Activated T-helper 2 cell treated with anti-CD3 and anti-CD28 coated beads, Interferon-gamma antibody, Interleukin-2, Interleukin-4, amounts not matched to agents 10 μg/mL and 5 μg/mL and 100 μg/mL, durations not matched to agents 14 hours and 24 hours and 36 hours (primary cell): ENCODE measurements at regions of chr15 and their contacts with region 1.

Region 1: DNA sequence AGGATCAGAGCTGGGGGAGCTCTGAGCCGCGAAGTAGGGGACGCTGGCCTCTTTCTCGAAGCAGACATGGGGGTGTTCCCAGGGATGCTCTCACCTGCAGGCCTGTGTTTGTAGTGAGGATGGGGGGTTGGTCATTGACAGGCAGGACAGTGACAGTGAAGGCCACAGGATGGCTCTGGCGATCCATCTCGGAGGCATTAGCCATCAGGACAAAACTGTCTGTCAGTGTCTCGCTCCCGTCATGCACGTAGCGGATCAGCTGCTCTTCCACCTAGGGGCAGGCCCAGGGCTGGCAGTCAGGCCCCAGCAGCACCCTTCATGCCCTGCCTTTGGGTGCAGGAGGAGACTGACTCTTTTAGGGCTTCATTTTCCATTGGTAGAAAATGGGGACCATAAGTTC is 28.0 kb downstream of the CSPG4 start:
- DNase-seq: no peak
- H3K4me3 Mint-ChIP-seq: no peak overlapping the region
- H3K27ac Mint-ChIP-seq: no peak overlapping the region
- H3K4me1 Mint-ChIP-seq: no peaks in the 10 kb centered on the region
- H3K27me3 Mint-ChIP-seq: no peaks in the 10 kb centered on the region

Region 2: DNA sequence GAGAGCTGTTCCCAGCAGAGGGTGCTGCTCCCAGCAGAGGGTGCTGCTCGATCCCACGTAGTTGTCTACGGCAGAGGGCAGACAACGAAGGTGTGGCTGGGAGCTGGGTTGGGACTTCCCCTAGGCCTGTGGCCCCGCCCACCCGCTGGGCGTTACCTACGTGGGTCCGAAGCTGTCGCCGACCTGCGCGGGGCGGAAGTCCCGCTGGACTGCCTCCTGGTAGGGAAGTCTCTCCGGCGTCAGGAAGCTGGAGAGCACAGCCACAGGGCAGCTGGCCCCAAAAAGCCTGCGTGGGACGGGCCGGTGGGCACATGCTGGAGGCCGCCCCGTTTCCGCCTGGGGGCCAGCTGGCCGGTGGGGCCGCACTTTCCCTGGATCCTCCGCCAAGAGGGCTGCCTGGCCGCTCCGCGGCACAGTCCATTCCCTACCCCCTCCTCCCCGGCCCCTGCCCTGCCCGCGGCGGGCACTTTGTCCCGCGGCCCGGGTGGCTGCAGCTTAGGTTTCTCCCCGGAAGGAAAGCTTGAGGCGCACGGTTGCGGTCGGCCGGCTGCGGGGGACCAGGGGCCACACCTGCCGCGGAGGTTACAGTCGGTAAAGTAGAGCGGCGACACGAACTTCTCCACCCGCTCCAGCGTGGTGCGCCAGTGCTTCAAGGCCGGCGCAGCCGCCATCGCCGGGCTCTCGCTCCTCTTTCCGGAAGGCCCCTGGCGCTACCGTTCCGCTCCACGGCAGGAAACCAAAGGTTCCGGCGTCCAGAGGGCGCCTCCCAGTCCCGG is 316.5 kb before region 1 on chr15 and contains the start of gene MAN2C1:
- intact Hi-C with region 1: loop called (anchors 2 kb)
- DNase-seq: peak; percentile 92
- H3K4me3 Mint-ChIP-seq: peak within 1 kb of the TSS; percentile 89
- H3K27ac Mint-ChIP-seq: peak within 1 kb of the TSS; percentile 93
- H3K4me1 Mint-ChIP-seq: peaks cover 16% of the 10 kb centered on the region
- H3K27me3 Mint-ChIP-seq: no peaks in the 10 kb centered on the region
- total RNA-seq, gene MAN2C1: 233 and 240 TPM in 2 replicates